ENCODE measurements at regions of chr11 and their contacts with region 1.

Region 1: GRCh38 chr11:33257897-33258630 is 883 bp downstream of the HIPK3 start:
- DNase-seq: peak; percentile 83 to 85
- H3K4me3 ChIP-seq: peak overlapping the region; percentile 90 to 92 (median 91)
- H3K27ac ChIP-seq: peak overlapping the region; percentile 99 to 100 (median 100)
- H3K4me1 ChIP-seq: peaks cover 24 to 35% of the 10 kb centered on the region in 2 donors
- H3K27me3 ChIP-seq: no peaks in the 10 kb centered on the region
- CTCF ChIP-seq: peak in 4 of 6 experiments; percentile 14 to 41 (median 32)
- POLR2A ChIP-seq: peak in 1 of 2 donors; percentile 77

Region 2: GRCh38 chr11:33168709-33169200 is 89.3 kb before region 1 on chr11:
- intact Hi-C with region 1: loop called (anchors 5 kb)
- DNase-seq: no peak
- H3K4me3 ChIP-seq: no peak overlapping the region
- H3K27ac ChIP-seq: peak overlapping the region; percentile 22 to 53 (median 47)
- H3K4me1 ChIP-seq: peaks cover 8 to 56% of the 10 kb centered on the region in 2 donors
- H3K27me3 ChIP-seq: no peaks in the 10 kb centered on the region
- CTCF ChIP-seq: no peak
- POLR2A ChIP-seq: no peak

Measured in thyroid gland (tissue), 4 donors.